ENCODE measurements at regions of chr1 and their contacts with region 1.

Region 1: DNA sequence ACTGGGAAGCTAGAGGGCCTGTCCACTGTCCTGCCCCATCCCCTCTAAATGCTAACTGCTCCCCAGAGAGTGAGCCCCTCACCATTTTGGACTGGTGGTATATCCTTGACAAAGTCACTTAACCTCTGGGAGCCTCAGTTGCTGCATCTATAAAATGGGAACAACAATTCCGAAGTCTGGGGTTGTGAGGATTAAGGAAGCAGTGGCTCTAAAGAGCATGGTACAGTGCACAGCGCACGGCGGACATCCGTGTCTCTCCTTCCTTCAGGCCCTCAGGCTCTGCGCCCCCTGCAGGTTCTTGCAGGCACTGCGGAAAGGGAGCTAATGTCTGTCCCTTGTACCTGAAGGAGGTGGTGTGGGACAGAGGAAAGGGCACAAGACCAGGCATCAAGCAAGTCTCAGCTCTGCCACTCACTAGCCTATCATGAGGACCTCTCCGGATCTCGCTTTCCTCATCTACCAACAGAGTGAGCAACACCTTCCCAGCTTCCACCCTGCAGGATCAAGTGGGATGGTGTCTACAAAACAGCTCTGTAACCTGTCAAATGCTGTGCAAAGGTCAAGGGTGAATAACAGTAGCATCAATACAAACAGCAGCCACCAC is 20.1 kb downstream of the ECE1 start:
- DNase-seq: peak; percentile 92
- H3K4me3 Mint-ChIP-seq: no peak overlapping the region
- H3K27ac Mint-ChIP-seq: peak overlapping the region; percentile 52
- H3K4me1 Mint-ChIP-seq: peaks cover 21% of the 10 kb centered on the region
- H3K27me3 Mint-ChIP-seq: no peaks in the 10 kb centered on the region

Region 2: DNA sequence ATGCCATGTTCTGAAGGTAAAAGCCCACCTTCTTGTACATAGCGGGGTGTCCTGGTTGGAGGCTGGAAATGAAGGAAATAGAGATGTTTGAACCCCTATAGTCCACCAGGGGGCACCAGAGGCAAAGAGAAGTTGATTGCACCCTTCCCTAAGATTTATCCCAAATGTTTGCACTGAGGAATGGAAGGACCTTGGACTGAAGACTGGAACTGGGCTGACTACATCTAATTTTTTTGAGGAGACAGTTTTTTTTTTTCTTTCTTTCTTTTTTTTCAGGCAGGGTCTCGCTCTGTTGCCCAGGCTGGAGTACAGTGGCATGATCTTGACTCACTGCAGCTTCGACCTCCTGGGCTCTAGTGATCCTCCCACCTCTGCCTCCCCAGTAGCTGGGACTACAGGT is 38.1 kb before region 1 on chr1:
- CTCF ChIA-PET with region 1: interaction called, 31 read pairs
- intact Hi-C with region 1: no loop called
- DNase-seq: peak; percentile 42
- H3K4me3 Mint-ChIP-seq: no peak overlapping the region
- H3K27ac Mint-ChIP-seq: no peak overlapping the region
- H3K4me1 Mint-ChIP-seq: no peaks in the 10 kb centered on the region
- H3K27me3 Mint-ChIP-seq: no peaks in the 10 kb centered on the region

Region 3: DNA sequence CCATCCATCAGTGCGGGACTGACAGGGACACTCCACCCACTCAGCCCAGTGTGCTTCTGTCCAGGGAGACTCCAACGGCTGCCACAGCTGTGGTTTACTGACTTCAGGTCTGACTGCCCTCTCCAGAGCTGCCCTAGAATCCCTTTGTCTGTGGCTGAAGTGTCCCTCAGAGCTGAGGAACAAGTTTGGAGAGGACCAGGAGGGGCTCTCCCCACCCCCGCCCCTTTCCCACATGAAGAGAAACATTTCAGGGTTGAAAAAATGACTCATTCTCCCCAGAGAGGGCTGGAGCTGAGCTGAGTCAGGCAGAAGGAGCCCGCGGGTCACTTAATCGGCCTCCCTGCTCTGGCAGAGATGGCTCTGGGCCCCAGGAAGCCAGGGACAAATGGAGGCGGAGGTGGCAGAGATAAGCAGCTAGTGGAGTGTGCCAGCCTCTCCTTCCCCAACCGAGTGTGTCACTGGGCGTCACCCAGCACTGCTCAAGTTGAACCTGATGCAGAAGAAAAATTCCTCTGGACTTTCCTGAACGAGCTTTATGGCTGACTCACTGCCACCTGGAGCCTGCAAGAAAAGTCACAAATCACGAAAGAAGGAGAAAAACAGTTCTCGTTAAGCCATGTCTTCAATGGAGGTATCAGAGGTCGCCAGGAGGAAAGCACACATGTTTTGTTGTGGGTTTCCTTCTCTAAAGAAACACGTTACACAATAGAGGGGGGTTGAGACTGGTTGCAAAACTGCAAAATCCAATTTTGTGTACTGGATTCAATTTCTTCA is 54.4 kb after region 1 on chr1:
- CTCF ChIA-PET with region 1: interaction called, 23 read pairs
- intact Hi-C with region 1: no loop called
- DNase-seq: peak; percentile 89
- H3K4me3 Mint-ChIP-seq: peak overlapping the region; percentile 63
- H3K27ac Mint-ChIP-seq: peak overlapping the region; percentile 97
- H3K4me1 Mint-ChIP-seq: peaks cover 90% of the 10 kb centered on the region
- H3K27me3 Mint-ChIP-seq: no peaks in the 10 kb centered on the region

Region 4: DNA sequence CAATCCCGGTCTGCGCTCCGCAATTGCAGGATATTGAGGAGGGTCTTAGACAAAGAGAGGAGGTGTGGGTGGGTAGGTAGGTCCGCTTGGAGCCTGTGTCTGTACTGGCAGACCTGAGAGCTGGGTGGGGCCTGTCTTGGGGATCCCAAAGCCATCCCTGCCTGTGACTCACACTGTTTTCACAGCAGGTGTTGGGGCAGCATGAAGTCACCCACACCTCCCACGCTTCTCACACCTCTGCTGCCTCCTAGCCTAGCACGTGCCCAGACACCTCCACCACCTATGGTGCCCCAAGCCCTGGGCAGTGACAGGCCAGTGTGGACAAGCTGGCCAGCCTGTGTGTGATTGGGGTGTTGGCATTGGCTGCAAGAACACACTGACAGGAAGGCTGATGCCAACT is 85.8 kb after region 1 on chr1:
- CTCF ChIA-PET with region 1: interaction called, 13 read pairs
- intact Hi-C with region 1: no loop called
- DNase-seq: peak; percentile 61
- H3K4me3 Mint-ChIP-seq: no peak overlapping the region
- H3K27ac Mint-ChIP-seq: no peak overlapping the region
- H3K4me1 Mint-ChIP-seq: peaks cover 9% of the 10 kb centered on the region
- H3K27me3 Mint-ChIP-seq: no peaks in the 10 kb centered on the region

Measured in activated naive CD4-positive, alpha-beta T cell treated with anti-CD3 and anti-CD28 coated beads for 36 hours (primary cell).